Gastrocnemius medialis (tissue), 4 donors: ENCODE measurements at regions of chr22 and their contacts with region 1.

Region 1: GRCh38 chr22:42553475-42554361 is at the start of gene SERHL2:
- DNase-seq: peak; percentile 62 to 87
- ATAC-seq: peak; percentile 83 to 90
- H3K4me3 ChIP-seq: peak within 1 kb of the TSS; percentile 60 to 76 (median 62)
- H3K27ac ChIP-seq: peak within 1 kb of the TSS in 3 of 4 donors; percentile 15 to 48 (median 46)
- H3K4me1 ChIP-seq: peaks cover 0 to 6% of the 10 kb centered on the region in 2 donors
- H3K27me3 ChIP-seq: no peaks in the 10 kb centered on the region
- CTCF ChIP-seq: no peak
- POLR2A ChIP-seq: peak; percentile 32 to 42
- total RNA-seq, gene SERHL2: 0.84 to 13.4 (median 1.7) TPM in 3 of 4 donors, not detected in the other

Region 2: GRCh38 chr22:42533638-42533977 is 20.1 kb before region 1 on chr22:
- in situ Hi-C with region 1: no loop called
- intact Hi-C with region 1: loop called (anchors 2 kb)
- DNase-seq: no peak
- ATAC-seq: no peak
- H3K4me3 ChIP-seq: no peak overlapping the region
- H3K27ac ChIP-seq: no peak overlapping the region
- H3K4me1 ChIP-seq: peaks cover 3 to 6% of the 10 kb centered on the region in 2 donors
- H3K27me3 ChIP-seq: peaks cover 0 to 2% (median 0%) of the 10 kb centered on the region in 3 donors
- CTCF ChIP-seq: no peak
- POLR2A ChIP-seq: no peak